B cell (primary cell): ENCODE measurements at regions of chr6 and their contacts with region 1.

Region 1: DNA sequence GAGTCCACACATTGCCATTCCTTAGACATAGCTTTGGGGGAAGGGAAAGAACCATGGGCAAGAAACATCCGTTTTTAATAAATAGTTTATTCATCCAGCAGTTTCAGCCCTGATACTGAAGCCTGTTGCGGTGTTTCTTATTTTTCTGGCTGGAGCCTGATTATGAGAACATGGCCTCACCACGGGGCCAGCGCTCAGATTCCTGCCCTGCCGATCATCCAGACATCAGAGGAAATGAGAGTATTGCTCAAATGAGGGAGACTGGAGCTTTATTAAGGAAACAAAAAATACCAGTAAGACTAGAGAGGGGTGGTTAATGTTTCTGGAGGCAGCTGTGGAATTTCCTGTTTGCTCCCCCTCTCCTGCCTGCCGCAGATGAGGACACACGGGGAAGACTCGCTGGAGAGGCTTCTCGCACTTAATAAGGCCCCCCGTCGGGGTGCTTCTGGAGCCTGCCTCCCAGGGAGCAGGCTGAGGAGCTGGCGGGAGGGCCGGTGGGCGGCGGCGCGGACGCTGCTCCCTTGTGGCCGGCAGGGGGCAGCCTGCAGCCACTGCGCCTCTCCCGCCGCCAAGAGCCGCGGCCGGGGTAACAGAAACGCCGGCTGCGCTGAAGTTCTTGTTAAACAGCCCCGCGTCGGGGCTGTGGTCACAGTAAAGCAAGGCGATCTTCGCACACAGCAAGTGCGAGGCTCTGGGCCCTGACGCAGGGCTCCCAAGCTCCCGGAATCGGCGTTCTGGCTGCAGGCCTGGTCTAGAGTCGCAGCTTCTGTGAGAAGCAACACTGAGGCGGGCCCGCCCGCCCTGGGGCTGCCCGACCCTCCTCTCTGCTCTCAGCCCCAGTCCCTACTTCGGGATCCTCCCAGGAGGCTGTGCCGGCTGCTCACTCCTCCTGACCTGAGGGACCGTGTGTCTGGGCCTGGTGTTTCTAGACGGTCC is 17.5 kb downstream of the LEMD2 start:
- DNase-seq: peak; percentile 77
- ATAC-seq: peak; percentile 76
- H3K4me3 ChIP-seq: no peak overlapping the region
- H3K4me3 Mint-ChIP-seq: no peak overlapping the region
- H3K27ac ChIP-seq: no peak overlapping the region
- H3K27ac Mint-ChIP-seq: no peak overlapping the region
- H3K4me1 ChIP-seq: peaks cover 0 to 6% of the 10 kb centered on the region in 2 donors
- H3K4me1 Mint-ChIP-seq: peaks cover 10% of the 10 kb centered on the region
- H3K27me3 ChIP-seq: peaks cover 0 to 7% (median 0%) of the 10 kb centered on the region in 4 experiments
- H3K27me3 Mint-ChIP-seq: peaks cover 12% of the 10 kb centered on the region
- CTCF ChIP-seq: peak; percentile 94

Region 2: GRCh38 chr6:33744001-33744848 is 27.2 kb before region 1 on chr6:
- CTCF ChIA-PET with region 1: interaction called, 13 read pairs
- POLR2A ChIA-PET with region 1: no interaction called
- intact Hi-C with region 1: no loop called
- DNase-seq: peak; percentile 81
- ATAC-seq: peak; percentile 81
- H3K4me3 ChIP-seq: no peak overlapping the region
- H3K4me3 Mint-ChIP-seq: no peak overlapping the region
- H3K27ac ChIP-seq: no peak overlapping the region
- H3K27ac Mint-ChIP-seq: peak overlapping the region; percentile 23
- H3K4me1 ChIP-seq: peaks cover 0 to 3% of the 10 kb centered on the region in 2 donors
- H3K4me1 Mint-ChIP-seq: peaks cover 3% of the 10 kb centered on the region
- H3K27me3 ChIP-seq: peaks cover 0 to 9% (median under 1%) of the 10 kb centered on the region in 4 experiments
- H3K27me3 Mint-ChIP-seq: peaks cover 24% of the 10 kb centered on the region
- CTCF ChIP-seq: peak; percentile 86

Region 3: GRCh38 chr6:33788694-33789549 is 17.5 kb after region 1 on chr6 and contains the start of gene LEMD2:
- CTCF ChIA-PET with region 1: interaction called, 48 read pairs
- POLR2A ChIA-PET with region 1: no interaction called
- intact Hi-C with region 1: loop called (anchors 1 kb)
- DNase-seq: peak; percentile 95
- ATAC-seq: peak; percentile 92
- H3K4me3 ChIP-seq: peak within 1 kb of the TSS; percentile 11 to 89 (median 73)
- H3K4me3 Mint-ChIP-seq: peak within 1 kb of the TSS; percentile 93
- H3K27ac ChIP-seq: peak within 1 kb of the TSS; percentile 78 to 89
- H3K27ac Mint-ChIP-seq: peak within 1 kb of the TSS; percentile 97
- H3K4me1 ChIP-seq: peaks cover 34 to 37% of the 10 kb centered on the region in 2 donors
- H3K4me1 Mint-ChIP-seq: peaks cover 47% of the 10 kb centered on the region
- H3K27me3 ChIP-seq: peaks cover 0 to 5% (median 0%) of the 10 kb centered on the region in 4 experiments
- H3K27me3 Mint-ChIP-seq: peaks cover 4% of the 10 kb centered on the region
- CTCF ChIP-seq: no peak
- total RNA-seq, gene LEMD2: 113 and 122 TPM in 2 replicates

Region 4: DNA sequence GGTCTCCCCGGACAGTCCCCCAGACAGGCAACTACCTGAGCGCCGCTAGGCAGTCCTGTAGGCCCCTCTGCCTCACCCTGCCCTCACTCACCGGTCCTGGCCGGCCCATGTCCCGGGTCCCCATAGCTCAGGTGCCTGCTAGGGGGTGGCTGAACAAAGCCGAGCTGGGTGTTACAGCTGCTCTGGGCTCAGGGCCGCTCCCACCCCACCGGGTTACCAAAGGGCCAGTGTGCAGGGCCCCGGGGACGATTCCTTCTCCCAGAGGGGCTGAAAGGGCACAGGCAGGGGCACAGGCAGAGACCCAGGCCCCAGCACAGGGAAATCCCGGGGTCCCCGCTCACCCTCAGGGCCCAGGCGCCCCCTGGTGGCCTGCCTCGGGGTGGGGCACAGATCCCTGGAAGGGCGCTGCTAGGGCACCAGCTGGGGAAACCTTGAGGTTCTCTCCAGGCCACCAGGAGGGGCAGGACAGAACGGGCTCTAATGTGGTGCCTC is 256.1 kb after region 1 on chr6:
- CTCF ChIA-PET with region 1: interaction called, 81 read pairs
- POLR2A ChIA-PET with region 1: no interaction called
- intact Hi-C with region 1: no loop called
- DNase-seq: peak; percentile 67
- ATAC-seq: peak; percentile 70
- H3K4me3 ChIP-seq: no peak overlapping the region
- H3K4me3 Mint-ChIP-seq: no peak overlapping the region
- H3K27ac ChIP-seq: no peak overlapping the region
- H3K27ac Mint-ChIP-seq: no peak overlapping the region
- H3K4me1 ChIP-seq: peaks cover 0 to 6% of the 10 kb centered on the region in 2 donors
- H3K4me1 Mint-ChIP-seq: peaks cover 4% of the 10 kb centered on the region
- H3K27me3 ChIP-seq: peaks cover 0 to 5% (median 0%) of the 10 kb centered on the region in 4 experiments
- H3K27me3 Mint-ChIP-seq: peaks cover 12% of the 10 kb centered on the region
- CTCF ChIP-seq: peak; percentile 78

Region 5: DNA sequence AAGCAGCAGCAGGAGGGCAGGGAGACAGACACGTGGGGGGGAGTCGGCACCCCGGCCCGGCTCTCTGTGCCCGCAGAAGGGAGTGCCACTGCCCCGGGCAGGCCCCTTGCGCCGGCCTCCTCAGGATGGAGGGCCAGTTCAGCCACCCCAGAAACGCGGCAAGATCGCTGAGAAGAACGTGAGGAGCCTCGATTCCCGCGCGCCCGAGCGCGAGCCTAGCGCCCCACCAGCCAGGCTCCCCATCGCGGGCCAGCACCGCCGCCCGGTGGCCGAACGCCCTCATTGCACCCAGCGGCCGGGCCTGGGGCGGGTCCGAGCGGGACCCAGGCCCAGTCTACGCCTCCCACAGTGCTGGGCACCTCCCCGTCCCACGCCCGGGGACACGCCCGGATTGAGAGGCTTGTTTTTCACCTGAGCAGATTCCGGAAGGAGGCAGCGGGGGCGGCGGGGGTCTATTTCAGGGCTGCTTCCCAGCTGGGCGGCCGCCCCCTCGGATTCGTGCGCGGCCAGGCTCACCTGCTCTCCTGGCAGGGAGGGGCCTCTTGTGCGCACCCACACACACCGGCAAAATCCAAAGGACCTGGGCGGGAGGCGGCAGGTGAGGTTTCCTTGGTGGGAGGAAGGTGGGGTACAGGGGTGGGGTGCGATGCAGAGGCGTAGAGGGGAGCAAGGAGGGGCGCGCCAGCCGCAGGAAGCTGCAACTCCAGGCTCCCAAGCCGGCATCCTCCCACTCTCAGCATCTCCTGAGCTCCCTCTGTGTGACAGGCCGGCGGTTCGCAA is 383.4 kb after region 1 on chr6:
- CTCF ChIA-PET with region 1: interaction called, 31 read pairs
- POLR2A ChIA-PET with region 1: no interaction called
- intact Hi-C with region 1: loop called (anchors 2 kb)
- DNase-seq: peak; percentile 76
- ATAC-seq: peak; percentile 94
- H3K4me3 ChIP-seq: peak overlapping the region in 3 of 5 experiments; percentile 33 to 39 (median 36)
- H3K4me3 Mint-ChIP-seq: peak overlapping the region; percentile 55
- H3K27ac ChIP-seq: no peak overlapping the region
- H3K27ac Mint-ChIP-seq: no peak overlapping the region
- H3K4me1 ChIP-seq: peaks cover 14 to 21% of the 10 kb centered on the region in 2 donors
- H3K4me1 Mint-ChIP-seq: peaks cover 16% of the 10 kb centered on the region
- H3K27me3 ChIP-seq: peaks cover 0 to 46% (median 18%) of the 10 kb centered on the region in 4 experiments
- H3K27me3 Mint-ChIP-seq: peaks cover 42% of the 10 kb centered on the region
- CTCF ChIP-seq: peak; percentile 99

Region 6: DNA sequence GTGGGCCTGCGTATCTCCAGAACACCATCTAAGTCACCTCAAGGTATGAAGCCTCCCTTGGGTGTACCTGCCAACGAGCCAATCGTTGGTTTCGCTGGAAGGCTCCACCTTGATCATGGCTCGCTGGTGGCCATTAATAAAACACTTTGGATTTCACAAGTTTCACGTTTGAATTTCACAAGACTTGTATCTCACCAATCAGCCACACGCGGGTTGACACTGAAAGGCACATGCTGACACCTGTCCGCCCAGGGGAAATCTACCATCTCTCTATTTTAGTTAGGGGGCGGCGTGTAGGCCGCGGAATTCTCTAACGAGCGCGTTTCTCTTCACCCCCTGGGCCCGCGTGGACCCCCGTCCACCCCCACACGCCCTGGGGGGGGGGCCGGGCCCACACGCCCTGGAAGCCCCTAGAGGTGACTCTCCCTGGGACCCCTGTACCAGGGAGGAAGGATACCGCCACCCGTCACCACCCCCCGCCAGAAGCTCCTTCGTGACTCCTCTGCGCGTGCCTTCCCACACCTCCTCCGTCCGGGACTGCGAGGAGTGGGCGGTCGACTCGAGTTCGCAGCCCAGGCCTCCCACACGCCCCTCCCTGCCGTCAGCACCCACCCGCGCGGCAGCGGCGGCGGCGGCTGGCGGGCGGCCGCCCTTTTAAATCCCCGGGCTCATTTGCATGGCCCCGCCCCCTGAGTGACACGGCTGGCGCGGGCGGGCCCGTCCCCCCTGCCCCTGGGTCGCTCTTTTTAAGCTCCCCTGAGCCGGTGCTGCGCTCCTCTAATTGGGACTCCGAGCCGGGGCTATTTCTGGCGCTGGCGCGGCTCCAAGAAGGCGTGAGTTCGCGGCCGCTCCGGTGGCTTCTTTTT is 464.9 kb after region 1 on chr6 and contains the start of gene HMGA1:
- CTCF ChIA-PET with region 1: no interaction called
- POLR2A ChIA-PET with region 1: no interaction called
- intact Hi-C with region 1: no loop called
- DNase-seq: peak; percentile 96
- ATAC-seq: peak; percentile 76
- H3K4me3 ChIP-seq: peak within 1 kb of the TSS; percentile 64 to 93 (median 88)
- H3K4me3 Mint-ChIP-seq: peak within 1 kb of the TSS; percentile 92
- H3K27ac ChIP-seq: peak within 1 kb of the TSS; percentile 96 to 98
- H3K27ac Mint-ChIP-seq: peak within 1 kb of the TSS; percentile 98
- H3K4me1 ChIP-seq: peaks cover 22 to 30% of the 10 kb centered on the region in 2 donors
- H3K4me1 Mint-ChIP-seq: peaks cover 34% of the 10 kb centered on the region
- H3K27me3 ChIP-seq: no peaks in the 10 kb centered on the region
- H3K27me3 Mint-ChIP-seq: no peaks in the 10 kb centered on the region
- CTCF ChIP-seq: no peak
- total RNA-seq, gene HMGA1: 66.4 and 72.3 TPM in 2 replicates